ENCODE measurements at regions of chr17 and their contacts with region 1.

Region 1: DNA sequence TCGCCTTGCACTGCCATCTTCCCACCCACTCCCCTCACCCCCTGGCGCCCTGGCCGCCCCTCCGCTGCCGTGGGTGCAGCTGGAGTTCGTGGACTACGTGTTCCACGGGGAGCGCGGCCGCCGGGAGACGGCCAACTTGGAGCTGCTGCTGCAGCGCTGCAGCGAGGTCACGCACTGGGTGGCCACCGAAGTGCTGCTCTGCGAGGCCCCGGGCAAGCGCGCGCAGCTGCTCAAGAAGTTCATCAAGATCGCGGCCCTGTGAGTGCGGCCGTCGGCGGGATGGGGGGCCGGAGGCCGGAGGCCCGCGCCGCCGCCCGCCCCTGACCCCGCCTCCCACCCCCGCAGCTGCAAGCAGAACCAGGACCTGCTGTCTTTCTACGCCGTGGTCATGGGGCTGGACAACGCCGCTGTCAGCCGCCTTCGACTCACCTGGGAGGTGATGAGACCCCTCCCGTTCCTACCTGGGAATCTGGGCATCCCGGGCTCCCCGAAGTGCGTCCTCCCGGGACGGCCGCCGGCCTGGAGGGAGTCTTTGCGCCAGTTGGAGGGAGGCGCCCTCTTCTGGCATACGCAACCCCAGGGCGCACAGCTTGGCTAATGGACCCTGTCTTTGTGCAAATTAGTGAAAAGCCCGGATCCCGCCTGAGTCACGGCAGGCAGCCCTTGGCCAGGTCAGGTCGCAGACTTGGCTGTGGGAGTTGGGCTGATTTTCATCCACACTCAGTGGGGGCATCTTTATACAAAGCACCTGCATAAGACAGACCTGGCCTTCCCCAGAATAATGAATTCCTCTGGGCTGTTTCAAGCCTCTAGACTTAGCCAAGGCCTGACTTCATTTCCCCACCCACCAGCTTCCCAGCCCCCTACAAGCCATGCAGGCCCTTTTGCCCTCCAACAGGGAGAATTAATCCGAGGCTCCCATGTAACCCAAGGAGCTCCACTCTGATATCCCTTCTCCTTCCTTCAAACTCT is 14.3 kb downstream of the RAPGEFL1 start:
- DNase-seq: no peak
- H3K4me3 ChIP-seq: peak overlapping the region; percentile 47
- H3K27me3 ChIP-seq: no peaks in the 10 kb centered on the region
- CTCF ChIP-seq: peak; percentile 91

Region 2: GRCh38 chr17:40015005-40015997 is 176.2 kb before region 1 on chr17 and contains the start of gene CSF3:
- CTCF ChIA-PET with region 1: interaction called, 17 read pairs
- POLR2A ChIA-PET with region 1: no interaction called
- DNase-seq: no peak
- H3K4me3 ChIP-seq: no peak within 1 kb of the TSS
- H3K27me3 ChIP-seq: no peaks in the 10 kb centered on the region
- CTCF ChIP-seq: no peak
- polyA plus RNA-seq, gene CSF3: not detected in 2 replicates

Region 3: DNA sequence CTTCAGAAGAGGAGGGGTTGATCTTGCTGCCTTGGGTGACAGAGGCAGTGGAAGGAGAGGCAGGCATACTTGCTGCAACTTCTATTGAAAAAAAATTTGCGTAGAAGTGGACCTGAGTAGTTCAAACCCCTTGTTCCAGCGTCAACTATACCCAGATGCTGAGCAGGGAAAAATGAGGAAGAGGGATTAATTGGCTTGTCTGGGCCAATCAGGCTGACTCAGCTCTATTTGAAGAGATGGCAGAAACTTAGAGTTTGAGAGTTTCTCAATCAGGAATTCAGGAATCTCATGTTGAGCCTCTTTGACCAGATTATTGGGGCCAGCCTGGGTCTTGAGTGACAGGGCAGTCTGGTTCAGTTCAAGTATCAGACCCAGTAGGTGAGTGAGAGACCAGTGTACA is 33.5 kb before region 1 on chr17:
- CTCF ChIA-PET with region 1: no interaction called
- POLR2A ChIA-PET with region 1: no interaction called
- DNase-seq: no peak
- H3K4me3 ChIP-seq: no peak overlapping the region
- H3K27me3 ChIP-seq: no peaks in the 10 kb centered on the region
- CTCF ChIP-seq: no peak

Region 4: GRCh38 chr17:40177275-40177874 is 14.1 kb before region 1 on chr17 and contains the start of gene RAPGEFL1:
- CTCF ChIA-PET with region 1: interaction called, 32 read pairs
- POLR2A ChIA-PET with region 1: no interaction called
- DNase-seq: no peak
- H3K4me3 ChIP-seq: peak within 1 kb of the TSS; percentile 45
- H3K27me3 ChIP-seq: no peaks in the 10 kb centered on the region
- CTCF ChIP-seq: no peak
- polyA plus RNA-seq, gene RAPGEFL1: 2.3 and 3.8 TPM in 2 replicates

Region 5: DNA sequence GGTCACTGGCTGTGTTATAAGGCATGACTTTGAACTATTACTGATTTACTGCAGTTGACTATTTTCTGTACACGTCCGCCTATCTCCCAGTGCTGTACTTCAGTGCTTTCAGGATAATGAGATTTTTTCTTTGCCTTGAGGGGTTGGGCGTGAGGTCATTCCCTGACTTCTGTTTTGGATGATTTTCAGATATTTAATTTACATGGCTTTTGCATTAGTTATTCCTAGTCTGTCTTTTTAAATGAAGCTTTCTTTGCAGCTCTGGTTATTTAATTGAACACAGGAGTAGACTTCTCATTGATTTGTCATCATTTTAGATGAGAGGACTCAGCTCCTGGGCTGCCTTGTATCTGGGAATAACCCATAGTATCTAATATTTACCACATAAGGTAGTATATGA is 51.3 kb after region 1 on chr17:
- CTCF ChIA-PET with region 1: no interaction called
- POLR2A ChIA-PET with region 1: no interaction called
- DNase-seq: peak; percentile 42
- H3K4me3 ChIP-seq: no peak overlapping the region
- H3K27me3 ChIP-seq: no peaks in the 10 kb centered on the region
- CTCF ChIP-seq: no peak

Region 6: DNA sequence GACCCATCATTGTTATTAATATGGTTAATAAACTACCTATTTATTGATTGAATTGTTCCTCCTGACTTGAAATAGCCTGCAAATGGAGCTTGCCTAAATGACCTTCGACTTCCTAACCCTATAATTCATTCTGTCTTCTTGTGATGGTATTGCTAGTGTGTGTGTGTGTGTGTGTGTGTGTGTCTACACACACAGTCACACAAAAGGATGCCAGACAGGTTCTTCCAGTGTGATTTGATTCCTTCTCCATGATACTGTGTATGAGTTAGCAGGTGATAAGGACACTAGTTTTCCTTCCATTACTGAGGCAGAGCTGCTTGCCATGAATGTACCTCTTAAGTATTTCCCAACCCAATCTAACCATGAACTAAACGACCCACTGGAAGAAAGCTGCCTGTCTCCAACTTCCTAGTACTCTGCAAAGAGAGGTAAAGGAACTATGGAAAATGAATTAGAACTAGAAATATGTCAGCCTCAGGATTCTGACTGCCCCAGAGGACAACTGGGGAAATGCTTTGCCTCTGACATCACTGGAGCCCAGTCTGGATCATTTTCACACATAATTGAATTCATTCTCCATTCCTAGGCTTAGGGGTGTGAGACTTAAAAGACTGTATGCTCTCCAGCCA is 92.7 kb after region 1 on chr17:
- CTCF ChIA-PET with region 1: interaction called, 16 read pairs
- POLR2A ChIA-PET with region 1: no interaction called
- DNase-seq: peak; percentile 70
- H3K4me3 ChIP-seq: peak overlapping the region; percentile 24
- H3K27me3 ChIP-seq: no peaks in the 10 kb centered on the region
- CTCF ChIP-seq: peak; percentile 45; the same call in 1 of the 2 replicates

Region 7: GRCh38 chr17:40295488-40296436 is 104.2 kb after region 1 on chr17:
- CTCF ChIA-PET with region 1: interaction called, 54 read pairs
- POLR2A ChIA-PET with region 1: no interaction called
- DNase-seq: no peak
- H3K4me3 ChIP-seq: no peak overlapping the region
- H3K27me3 ChIP-seq: no peaks in the 10 kb centered on the region
- CTCF ChIP-seq: no peak

Measured in BJ (cell line).